Activated CD4-positive, alpha-beta memory T cell treated with anti-CD3 and anti-CD28 coated beads, Interleukin-2, amount 10 ng/mL, durations not matched to agents 7 days and 5 days (primary cell): ENCODE measurements at regions of chr2 and their contacts with region 1.

Region 1: DNA sequence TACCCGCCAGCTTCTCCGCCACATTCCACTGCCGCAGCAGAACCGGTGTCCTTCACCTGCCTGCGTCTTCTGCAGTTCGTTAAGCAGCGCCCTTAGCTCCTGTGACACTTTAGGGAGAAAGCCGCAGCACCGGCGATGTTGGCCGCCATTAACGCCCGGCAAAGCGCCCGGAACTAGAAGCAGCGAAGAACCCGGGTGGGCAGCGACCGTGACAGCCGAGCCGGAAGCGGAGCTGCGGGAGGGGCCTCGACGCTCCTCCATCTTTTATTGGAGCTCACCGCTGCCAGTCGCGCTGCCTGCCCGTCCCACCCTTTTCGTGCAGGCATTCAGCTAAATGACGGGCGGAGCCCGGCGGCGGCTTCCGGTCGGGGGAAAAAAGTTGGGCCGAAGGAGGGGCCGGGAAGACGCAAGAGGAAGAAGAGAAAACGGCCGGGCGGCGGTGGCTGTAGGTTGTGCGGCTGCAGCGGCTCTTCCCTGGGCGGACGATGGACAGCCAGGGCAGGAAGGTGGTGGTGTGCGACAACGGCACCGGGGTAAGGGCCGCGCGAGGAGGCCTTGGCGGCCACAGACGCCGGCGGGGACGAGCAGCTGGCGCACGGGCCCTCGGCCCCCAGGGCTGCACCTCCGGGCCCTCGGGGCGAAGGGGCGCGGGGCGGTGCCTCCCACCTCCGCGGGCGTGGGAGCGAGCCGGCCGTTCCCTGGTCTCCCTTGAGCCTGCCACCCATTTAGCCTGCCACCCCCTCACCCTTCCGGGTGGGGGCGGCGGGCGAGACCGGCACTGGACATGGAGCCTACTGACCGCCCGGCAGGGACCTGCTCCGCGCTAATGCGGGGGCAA is at the start of gene ACTR2:
- DNase-seq: peak; percentile 96
- H3K4me3 Mint-ChIP-seq: peak within 1 kb of the TSS; percentile 96
- H3K27ac Mint-ChIP-seq: peak within 1 kb of the TSS; percentile 99
- H3K4me1 Mint-ChIP-seq: peaks cover 46% of the 10 kb centered on the region
- H3K27me3 Mint-ChIP-seq: no peaks in the 10 kb centered on the region
- total RNA-seq, gene ACTR2: 514 to 517 TPM

Region 2: GRCh38 chr2:64737547-64737946 is 490.1 kb before region 1 on chr2:
- CTCF ChIA-PET with region 1: no interaction called
- POLR2A ChIA-PET with region 1: no interaction called
- DNase-seq: no peak
- H3K4me3 Mint-ChIP-seq: no peak overlapping the region
- H3K27ac Mint-ChIP-seq: peak overlapping the region; percentile 47
- H3K4me1 Mint-ChIP-seq: peaks cover 21% of the 10 kb centered on the region
- H3K27me3 Mint-ChIP-seq: peaks cover 2% of the 10 kb centered on the region

Region 3: DNA sequence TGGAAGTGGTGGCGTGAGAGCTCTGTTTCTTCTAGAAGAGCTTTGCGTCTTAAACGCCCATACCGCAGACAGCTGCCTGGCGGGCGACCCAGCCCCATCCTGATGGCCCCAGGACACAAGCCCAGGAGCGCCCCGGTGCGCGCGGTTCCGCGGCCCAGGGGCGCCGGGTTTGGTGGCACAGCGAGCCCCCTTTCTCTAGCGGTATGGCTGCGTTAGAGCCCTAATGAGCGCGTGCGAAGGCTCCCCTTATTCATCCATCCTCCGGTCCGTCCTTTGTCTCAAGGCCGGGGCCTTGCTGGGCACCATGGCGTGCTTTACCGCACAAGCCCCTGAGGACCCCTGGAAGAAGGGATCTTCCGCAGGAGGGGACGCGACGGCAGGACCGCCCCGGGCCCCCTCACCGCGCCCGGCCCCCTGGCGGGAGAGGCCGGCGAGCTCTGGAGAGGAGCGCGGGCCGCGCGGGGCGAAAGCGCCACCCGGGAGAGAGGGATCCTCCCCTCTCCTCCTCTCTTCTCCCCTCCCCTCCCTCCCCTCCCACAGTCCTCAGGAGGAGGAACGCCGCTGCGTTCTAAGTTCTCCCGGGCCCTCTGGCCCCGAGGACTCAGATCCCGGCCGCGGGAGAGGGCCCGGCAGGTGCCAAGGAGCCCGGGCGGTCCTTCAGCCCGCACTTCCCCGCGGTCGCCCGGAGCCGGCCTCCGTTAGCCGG is 239.1 kb before region 1 on chr2:
- CTCF ChIA-PET with region 1: no interaction called
- POLR2A ChIA-PET with region 1: interaction called, 17 read pairs
- DNase-seq: peak; percentile 88
- H3K4me3 Mint-ChIP-seq: peak overlapping the region; percentile 72
- H3K27ac Mint-ChIP-seq: peak overlapping the region; percentile 74
- H3K4me1 Mint-ChIP-seq: peaks cover 70% of the 10 kb centered on the region
- H3K27me3 Mint-ChIP-seq: peaks cover 4% of the 10 kb centered on the region

Region 4: DNA sequence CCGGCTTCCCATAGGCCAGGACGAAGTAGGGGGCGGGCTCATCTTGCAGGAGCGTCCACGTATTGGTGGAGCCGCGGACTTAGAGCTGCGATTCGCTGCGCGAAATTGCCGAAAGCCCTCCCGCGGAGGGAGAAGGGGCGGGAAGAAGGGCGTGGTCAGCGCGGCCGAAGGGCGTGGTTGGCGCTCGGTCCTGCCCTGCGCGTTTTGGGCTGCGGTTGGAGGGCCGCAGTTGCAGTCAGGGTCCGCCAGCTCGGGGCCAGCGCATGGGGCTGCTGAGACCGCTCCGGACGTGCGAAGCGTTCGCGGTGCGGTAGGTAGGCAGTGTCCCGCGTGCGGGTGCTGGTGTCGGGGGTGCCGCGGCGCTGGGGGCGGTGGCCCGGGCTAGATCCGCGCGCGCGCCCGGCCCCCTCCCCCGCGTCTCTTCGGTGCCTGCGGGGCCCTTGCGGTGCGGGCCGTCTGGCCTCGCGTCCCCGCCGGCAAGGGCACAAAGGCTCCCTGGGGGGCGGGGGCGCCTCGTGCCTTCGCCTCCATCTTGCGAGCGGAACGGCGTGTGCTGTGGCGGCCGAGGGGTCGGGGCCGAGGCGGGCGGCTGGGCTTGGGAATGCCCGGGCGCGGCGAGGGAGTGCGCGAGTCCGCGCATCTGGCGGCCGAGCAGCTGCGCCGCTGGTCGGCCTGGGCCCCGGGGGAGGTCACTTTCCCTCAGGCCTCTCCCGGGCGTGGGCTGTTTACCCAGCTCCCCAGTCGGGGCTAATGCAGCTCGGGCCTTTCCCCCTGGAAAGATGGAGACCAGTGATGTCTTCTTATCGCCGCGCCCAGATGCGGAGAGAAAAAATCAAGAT is 171.2 kb before region 1 on chr2 and contains the start of gene CEP68:
- CTCF ChIA-PET with region 1: interaction called, 3 read pairs
- POLR2A ChIA-PET with region 1: interaction called, 58 read pairs
- DNase-seq: peak; percentile 98
- H3K4me3 Mint-ChIP-seq: peak within 1 kb of the TSS; percentile 94
- H3K27ac Mint-ChIP-seq: peak within 1 kb of the TSS; percentile 77
- H3K4me1 Mint-ChIP-seq: peaks cover 59% of the 10 kb centered on the region
- H3K27me3 Mint-ChIP-seq: peaks cover under 1% of the 10 kb centered on the region
- total RNA-seq, gene CEP68: 12.8 to 13.3 TPM

Region 5: GRCh38 chr2:65186872-65187851 is 40.5 kb before region 1 on chr2:
- CTCF ChIA-PET with region 1: interaction called, 14 read pairs
- POLR2A ChIA-PET with region 1: interaction called, 5 read pairs
- DNase-seq: peak; percentile 70
- H3K4me3 Mint-ChIP-seq: no peak overlapping the region
- H3K27ac Mint-ChIP-seq: no peak overlapping the region
- H3K4me1 Mint-ChIP-seq: peaks cover 9% of the 10 kb centered on the region
- H3K27me3 Mint-ChIP-seq: peaks cover 18% of the 10 kb centered on the region

Region 6: DNA sequence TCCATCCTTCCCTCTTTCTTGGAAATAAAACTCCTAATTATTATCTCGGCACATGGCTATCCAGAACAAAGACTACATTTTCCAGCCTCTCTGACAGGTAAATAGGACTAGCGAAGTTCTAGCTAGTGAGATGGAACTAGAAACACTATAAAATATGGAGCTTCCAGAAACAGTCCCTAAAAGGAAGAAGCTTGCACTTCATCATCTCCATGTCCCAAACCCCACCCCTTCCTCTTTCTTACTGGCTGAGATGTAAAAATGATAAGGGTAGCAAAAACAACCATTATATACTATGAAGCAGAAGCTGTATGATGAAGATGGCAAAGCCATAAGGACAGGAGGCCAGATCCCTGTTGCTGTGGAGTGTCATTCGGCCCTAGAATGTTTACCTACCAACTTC is 11.7 kb before region 1 on chr2:
- CTCF ChIA-PET with region 1: interaction called, 4 read pairs
- POLR2A ChIA-PET with region 1: interaction called, 29 read pairs
- DNase-seq: no peak
- H3K4me3 Mint-ChIP-seq: no peak overlapping the region
- H3K27ac Mint-ChIP-seq: no peak overlapping the region
- H3K4me1 Mint-ChIP-seq: peaks cover 8% of the 10 kb centered on the region
- H3K27me3 Mint-ChIP-seq: no peaks in the 10 kb centered on the region

Region 7: DNA sequence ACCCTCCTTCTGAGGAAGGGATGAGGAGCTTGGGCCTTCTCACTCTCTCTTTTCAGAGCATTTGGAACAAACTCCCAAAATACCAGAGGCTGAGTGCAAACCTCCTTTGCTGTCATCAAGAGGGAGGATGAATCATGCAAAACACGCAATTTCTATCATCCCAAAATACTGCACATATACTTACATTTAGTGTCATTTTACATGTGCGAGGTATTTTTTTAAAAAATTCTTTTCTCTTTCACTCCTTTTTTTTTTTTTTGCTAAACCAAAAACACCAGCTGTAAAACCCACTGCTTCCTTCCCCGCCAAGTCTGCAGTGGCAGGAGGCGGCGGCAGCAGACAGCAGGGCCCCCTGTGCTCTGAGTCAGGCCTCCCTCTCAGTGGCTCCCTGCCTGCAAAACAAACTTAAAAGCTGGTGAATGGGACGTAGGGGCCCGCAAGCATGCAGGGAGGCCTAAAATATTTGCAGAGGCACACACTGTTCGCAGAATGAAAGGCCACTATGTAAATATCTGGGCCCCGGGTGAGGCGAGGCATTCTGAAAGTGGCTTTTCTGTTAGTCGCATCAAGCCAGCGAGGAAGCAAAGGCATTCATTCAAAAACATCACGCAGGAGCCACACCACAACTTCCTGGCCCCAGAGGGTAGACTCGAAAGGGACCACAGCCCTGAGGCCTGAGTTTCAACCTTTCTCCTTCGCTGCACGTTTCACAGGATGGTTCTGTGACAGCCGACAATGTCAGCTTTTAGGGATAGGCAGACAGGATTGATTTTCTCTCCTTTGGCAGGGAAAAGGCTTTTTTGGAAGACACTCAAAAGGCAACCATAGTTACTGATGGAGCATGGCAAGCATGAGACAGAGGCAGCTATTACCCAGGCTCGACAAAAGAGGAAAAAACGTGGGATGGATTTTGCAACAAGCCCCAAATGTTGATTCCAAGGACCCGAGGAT is 73.4 kb after region 1 on chr2:
- CTCF ChIA-PET with region 1: no interaction called
- POLR2A ChIA-PET with region 1: interaction called, 25 read pairs
- DNase-seq: peak; percentile 83
- H3K4me3 Mint-ChIP-seq: peak overlapping the region; percentile 63
- H3K27ac Mint-ChIP-seq: peak overlapping the region; percentile 85
- H3K4me1 Mint-ChIP-seq: peaks cover 52% of the 10 kb centered on the region
- H3K27me3 Mint-ChIP-seq: peaks cover 30% of the 10 kb centered on the region

Region 8: DNA sequence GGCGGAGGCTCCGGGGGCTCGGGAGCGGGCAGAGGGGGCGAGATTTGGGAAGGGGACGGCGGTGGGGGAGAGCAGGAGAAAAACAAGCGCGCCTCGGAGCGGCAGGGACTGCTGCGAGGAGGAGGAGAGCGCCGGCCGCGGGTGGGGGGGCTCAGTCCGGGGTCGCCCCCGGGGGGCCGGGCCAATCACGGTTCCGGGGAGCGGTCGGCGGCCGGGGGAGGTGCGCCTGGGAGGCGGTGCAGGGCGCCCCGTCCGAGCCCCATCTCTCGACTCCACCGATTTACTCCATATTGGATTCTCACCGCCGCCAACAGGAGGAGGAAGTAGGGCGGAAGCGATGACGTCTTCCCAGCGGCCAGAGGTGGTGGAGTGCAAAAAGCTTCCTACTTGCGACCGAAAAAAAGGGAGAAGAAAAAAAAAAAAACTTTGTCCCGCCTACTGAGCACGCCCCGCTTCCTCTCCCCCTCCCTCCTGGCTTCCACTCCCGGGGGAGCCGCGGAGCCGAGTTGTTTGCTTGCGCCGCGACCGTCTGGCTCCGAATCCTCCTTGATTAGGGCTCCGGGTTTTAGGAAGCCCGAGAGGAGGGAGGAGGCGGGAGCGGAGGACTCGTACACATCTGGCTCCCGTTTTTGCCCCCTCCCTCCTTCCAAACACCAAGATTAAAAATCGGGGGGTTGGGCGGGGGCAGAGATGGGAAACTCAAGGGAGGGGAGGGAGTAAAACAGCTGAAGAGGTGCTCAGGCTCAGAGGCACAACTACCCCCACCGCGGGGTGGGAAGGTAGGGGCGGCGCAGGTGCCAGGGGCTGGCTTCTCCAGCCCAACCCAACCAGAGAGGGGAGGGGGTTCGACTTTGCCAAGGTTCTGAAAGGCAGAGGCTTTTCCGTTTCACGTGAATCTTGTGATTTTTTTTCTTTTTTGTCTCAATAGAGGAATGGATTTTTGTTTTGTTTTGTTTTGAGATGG is 204.9 kb after region 1 on chr2 and contains the start of gene SPRED2:
- CTCF ChIA-PET with region 1: interaction called, 3 read pairs
- POLR2A ChIA-PET with region 1: interaction called, 22 read pairs
- DNase-seq: peak; percentile 81
- H3K4me3 Mint-ChIP-seq: peak within 1 kb of the TSS; percentile 92
- H3K27ac Mint-ChIP-seq: peak within 1 kb of the TSS; percentile 72
- H3K4me1 Mint-ChIP-seq: peaks cover 32% of the 10 kb centered on the region
- H3K27me3 Mint-ChIP-seq: peaks cover 45% of the 10 kb centered on the region
- total RNA-seq, gene SPRED2: 12.2 to 12.6 TPM

Region 9: GRCh38 chr2:65566620-65567019 is 339.0 kb after region 1 on chr2:
- CTCF ChIA-PET with region 1: no interaction called
- POLR2A ChIA-PET with region 1: no interaction called
- DNase-seq: no peak
- H3K4me3 Mint-ChIP-seq: no peak overlapping the region
- H3K27ac Mint-ChIP-seq: no peak overlapping the region
- H3K4me1 Mint-ChIP-seq: peaks cover 4% of the 10 kb centered on the region
- H3K27me3 Mint-ChIP-seq: peaks cover 12% of the 10 kb centered on the region